Sigmoid colon (tissue), 7 donors: ENCODE measurements at regions of chr12 and their contacts with region 1.

Region 1: DNA sequence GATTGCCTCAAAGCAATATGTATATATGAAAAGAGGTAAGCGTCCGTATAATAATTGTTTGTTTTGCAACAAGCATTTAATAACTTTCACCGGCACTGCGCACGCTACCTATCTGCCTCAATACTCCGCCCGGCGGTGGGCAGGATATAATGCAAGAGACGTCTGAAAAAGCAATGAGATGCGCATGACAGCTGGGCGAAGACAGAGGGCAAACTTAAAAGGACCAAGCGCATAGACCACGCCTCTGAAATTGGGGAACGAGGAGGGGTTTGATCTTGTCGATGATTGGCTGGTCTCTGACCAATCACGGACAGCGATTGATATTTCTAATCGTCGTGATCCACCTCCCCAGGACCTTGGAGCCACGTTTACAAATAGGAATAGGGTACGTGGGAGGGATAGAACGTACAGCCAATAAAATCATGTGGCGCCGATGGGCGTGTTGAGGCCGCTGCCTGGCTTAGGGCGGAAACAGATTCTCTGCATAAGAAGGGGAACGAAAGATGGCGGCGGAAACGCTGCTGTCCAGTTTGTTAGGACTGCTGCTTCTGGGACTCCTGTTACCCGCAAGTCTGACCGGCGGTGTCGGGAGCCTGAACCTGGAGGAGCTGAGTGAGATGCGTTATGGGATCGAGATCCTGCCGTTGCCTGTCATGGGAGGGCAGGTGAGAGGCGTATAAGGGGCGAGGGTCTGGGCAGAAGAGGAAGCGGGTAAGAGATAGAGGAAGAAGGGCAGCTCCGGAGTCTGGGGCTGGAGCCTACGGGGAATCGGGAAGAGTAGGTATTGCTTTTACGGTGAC is at the start of gene OS9:
- DNase-seq: peak; percentile 99
- H3K4me3 ChIP-seq: peak within 1 kb of the TSS; percentile 68 to 94 (median 80)
- H3K27ac ChIP-seq: peak within 1 kb of the TSS; percentile 66 to 88 (median 81)
- H3K4me1 ChIP-seq: peaks cover 0 to 18% (median 12%) of the 10 kb centered on the region in 4 donors
- H3K27me3 ChIP-seq: no peaks in the 10 kb centered on the region
- CTCF ChIP-seq: peak; percentile 58 to 84 (median 74)
- EP300 ChIP-seq: no peak
- POLR2A ChIP-seq: peak; percentile 68 to 69
- total RNA-seq, gene OS9: 122 to 183 (median 156) TPM

Region 2: DNA sequence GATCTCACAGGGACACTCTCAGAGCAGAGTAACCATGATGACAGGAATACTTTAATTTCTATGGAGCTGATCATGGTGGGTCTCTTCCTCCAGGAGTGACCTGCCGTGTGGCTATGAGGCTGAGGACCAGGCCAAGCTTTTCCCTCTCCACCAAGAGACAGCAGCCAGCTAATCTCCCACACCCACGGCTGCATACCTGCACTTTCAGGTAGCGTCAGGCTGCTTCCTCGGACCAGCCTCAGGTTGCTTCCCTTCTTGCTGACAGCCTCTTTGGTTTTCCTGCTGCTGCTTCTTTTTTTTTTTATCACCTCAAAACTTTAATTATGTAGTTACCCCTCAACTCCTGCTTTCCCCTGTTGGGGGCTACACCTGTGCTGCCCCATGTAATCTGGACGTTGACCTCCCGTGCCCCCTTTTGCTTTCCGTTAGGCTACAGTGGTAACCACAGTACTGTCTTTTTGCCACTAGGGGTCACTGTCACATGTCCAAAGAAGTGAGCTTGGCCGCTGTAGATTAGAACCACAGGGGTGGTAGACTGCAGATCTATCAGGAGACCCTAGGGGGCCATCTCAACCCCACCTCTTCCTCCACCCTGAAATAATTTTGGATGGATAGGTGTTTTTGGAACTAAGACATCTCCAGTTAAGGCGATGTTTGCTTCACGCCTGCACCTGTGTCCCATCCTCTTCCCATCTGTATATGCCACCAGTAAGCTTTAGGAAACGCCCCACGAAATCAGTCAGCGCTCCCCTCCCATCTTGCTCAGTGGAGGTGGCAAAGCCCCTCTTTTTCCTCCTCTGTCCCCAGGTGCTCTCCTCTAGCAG is 110.6 kb before region 1 on chr12:
- intact Hi-C with region 1: loop called (anchors 5 kb)
- DNase-seq: peak; percentile 86
- H3K4me3 ChIP-seq: no peak overlapping the region
- H3K27ac ChIP-seq: no peak overlapping the region
- H3K4me1 ChIP-seq: no peaks in the 10 kb centered on the region
- H3K27me3 ChIP-seq: peaks cover 0 to 3% (median 0%) of the 10 kb centered on the region in 3 donors
- CTCF ChIP-seq: peak; percentile 96 to 97 (median 97)
- EP300 ChIP-seq: no peak
- POLR2A ChIP-seq: no peak

Region 3: GRCh38 chr12:57621497-57622292 is 72.2 kb before region 1 on chr12:
- intact Hi-C with region 1: loop called (anchors 5 kb)
- DNase-seq: peak; percentile 81
- H3K4me3 ChIP-seq: peak overlapping the region in 3 of 4 donors; percentile 40 to 48 (median 44)
- H3K27ac ChIP-seq: no peak overlapping the region
- H3K4me1 ChIP-seq: peaks cover 0 to 17% (median 15%) of the 10 kb centered on the region in 4 donors
- H3K27me3 ChIP-seq: peaks cover 0 to 59% (median 4%) of the 10 kb centered on the region in 3 donors
- CTCF ChIP-seq: peak; percentile 93 to 96 (median 94)
- EP300 ChIP-seq: no peak
- POLR2A ChIP-seq: no peak

Region 4: DNA sequence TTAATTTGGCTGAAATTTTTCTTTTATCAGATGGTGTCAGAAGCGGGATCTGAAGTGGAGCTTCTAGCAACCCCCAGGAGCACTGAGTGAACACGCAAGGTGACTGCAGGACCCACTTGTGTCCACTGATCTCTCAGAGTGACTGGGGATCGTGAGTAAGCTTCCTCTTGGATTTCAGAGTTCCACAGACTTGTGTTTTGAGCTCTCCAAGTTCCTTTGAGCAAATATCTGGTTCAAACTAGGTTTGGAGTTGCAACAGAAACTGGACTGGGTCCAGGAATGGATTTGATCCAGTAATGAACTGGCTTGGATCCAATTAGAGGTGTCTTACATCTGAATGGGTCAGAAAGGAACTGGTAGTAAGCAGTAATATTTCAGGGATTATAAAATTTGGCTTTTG is 36.1 kb before region 1 on chr12:
- intact Hi-C with region 1: no loop called
- DNase-seq: peak; percentile 66
- H3K4me3 ChIP-seq: no peak overlapping the region
- H3K27ac ChIP-seq: no peak overlapping the region
- H3K4me1 ChIP-seq: no peaks in the 10 kb centered on the region
- H3K27me3 ChIP-seq: no peaks in the 10 kb centered on the region
- CTCF ChIP-seq: no peak
- EP300 ChIP-seq: no peak
- POLR2A ChIP-seq: no peak